Activated CD4-positive, alpha-beta T cell treated with anti-CD3 and anti-CD28 coated beads, Interleukin-2, amount 10 ng/mL, durations not matched to agents 24 days and 14 days (primary cell): ENCODE measurements at regions of chr16 and their contacts with region 1.

Region 1: DNA sequence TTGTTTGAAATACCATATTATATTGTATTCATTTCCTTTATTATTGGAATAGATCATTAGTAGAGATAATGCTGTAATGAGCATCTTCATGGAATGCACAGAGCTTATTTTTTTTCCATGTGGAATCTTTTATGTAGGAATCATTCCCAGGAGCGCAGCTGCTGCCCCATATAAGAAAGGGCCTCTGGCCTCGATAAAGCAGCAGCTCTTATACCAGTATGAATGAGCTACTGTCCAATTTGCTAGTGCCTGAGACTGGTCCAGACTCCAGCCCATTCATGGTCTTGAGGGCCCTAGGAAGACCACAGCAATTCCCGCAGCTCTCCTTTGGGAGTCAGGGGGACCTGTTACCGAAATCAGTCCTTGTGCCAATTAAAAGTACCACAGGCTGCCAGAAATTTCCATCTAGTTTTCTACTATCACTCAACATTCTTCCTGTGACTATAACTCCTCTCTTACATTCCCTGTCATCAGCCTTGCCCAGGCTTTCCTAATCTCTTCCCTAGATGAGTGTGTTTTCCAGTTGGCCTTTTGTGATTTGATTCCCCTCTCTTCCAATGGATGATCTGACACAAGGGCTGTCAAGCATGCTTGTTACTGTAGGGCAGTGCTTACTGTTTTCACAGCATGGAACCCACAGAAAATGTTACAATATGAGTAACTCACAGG is 1.9 kb downstream of the ZNF843 start:
- DNase-seq: no peak
- H3K4me3 Mint-ChIP-seq: no peak overlapping the region
- H3K27ac Mint-ChIP-seq: no peak overlapping the region
- H3K4me1 Mint-ChIP-seq: peaks cover 21% of the 10 kb centered on the region
- H3K27me3 Mint-ChIP-seq: peaks cover 5% of the 10 kb centered on the region

Region 2: GRCh38 chr16:30984669-30985400 is 455.8 kb before region 1 on chr16 and contains the start of gene HSD3B7:
- intact Hi-C with region 1: loop called (anchors 5 kb)
- DNase-seq: peak; percentile 96
- H3K4me3 Mint-ChIP-seq: peak within 1 kb of the TSS; percentile 52
- H3K27ac Mint-ChIP-seq: peak within 1 kb of the TSS; percentile 47
- H3K4me1 Mint-ChIP-seq: peaks cover 8% of the 10 kb centered on the region
- H3K27me3 Mint-ChIP-seq: no peaks in the 10 kb centered on the region
- total RNA-seq, gene HSD3B7: 2.9 and 3.2 TPM in 2 replicates

Region 3: DNA sequence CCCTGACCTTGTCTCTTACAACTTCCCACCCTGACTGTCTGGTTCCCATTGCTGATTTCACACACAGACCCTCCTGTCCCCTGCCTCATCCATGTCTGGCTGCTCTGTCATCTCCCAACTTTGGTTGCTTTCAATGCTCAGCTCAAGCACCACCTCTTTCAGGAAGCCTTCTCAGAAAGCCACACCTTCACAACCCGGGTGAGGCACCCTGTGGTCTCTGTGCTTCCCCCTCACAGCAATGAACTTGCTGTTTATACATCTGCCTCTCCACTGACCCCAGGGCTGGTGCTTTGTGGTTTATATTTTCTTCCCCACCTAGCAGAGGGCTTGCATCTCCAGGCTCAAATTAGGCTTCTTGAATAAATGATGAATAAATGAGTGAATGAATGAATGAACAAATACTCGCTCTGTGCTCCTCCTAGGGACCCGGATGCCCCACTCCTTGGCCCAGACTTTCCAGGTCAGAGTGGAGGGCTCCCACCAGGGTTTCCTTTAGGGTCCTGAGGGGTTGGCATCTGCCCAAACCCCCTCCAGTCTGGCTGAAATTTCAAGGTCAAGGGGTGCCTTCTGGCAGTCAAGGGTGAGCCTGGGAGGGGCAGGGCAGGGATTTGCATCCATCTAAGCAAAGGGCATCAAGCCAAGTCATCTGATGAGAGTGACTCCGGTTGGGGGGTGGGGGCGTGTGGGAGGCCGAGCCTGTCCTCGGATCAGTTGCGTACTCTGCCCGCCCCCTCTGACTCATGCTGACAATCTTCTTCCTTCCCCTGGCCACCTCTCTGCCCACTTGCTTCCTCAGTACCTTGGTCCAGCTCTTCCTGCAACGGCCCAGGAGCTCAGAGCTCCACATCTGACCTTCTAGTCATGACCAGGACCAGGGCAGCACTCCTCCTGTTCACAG is 86.0 kb before region 1 on chr16 and contains the start of gene ITGAX:
- intact Hi-C with region 1: no loop called
- DNase-seq: peak; percentile 92
- H3K4me3 Mint-ChIP-seq: peak within 1 kb of the TSS; percentile 91
- H3K27ac Mint-ChIP-seq: peak within 1 kb of the TSS; percentile 95
- H3K4me1 Mint-ChIP-seq: peaks cover 56% of the 10 kb centered on the region
- H3K27me3 Mint-ChIP-seq: no peaks in the 10 kb centered on the region
- total RNA-seq, gene ITGAX: 44.3 and 45.9 TPM in 2 replicates